Left colon (tissue), 2 donors: ENCODE measurements at regions of chr17 and their contacts with region 1.

Region 1: DNA sequence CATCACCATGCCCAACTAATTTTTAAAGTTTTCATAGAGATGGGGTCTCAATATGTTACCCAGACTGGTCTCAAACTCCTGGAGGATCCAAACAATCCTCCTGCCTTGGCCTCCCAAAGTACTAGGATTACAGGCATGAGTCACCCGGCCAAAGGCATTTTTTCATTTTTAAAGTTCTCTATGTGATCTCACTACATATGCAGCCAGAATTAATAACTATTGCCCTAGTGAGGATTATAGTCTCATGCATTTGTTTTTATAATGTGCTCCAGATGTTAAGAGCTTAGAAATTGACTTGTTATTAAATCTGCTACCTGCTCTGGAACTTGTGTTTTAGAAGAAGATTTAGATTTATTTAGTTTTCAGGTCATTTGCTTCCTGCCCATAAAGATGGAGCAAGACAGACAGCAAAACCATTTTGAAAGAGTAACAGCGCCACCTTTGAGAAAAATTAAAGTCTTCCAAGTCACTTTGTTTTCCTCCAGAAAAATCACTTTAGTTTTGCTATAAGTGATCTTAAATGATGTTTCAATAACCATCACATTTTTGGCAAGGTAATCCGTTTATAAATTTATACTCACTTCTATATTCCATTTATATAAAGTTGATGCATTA is 79.5 kb downstream of the CA4 start:
- DNase-seq: no peak
- ATAC-seq: no peak

Region 2: DNA sequence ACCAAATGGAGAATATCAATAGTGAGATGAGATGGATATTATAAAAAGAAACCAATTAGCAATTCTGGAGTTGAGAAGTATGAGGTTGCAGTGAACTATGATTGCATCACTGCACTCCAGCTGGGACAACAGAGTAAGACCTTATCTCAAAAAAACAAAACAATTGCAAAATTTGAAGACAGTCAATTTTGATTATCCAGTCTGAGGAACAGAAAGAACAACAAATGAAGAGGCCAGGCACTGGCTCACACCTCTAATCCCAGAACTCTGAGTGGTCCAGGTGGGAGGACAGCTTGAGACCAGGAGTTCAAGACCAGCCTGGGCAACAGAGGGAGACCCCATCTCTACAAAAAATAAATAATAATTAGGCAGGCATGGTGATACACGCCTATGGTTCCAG is 127.6 kb after region 1 on chr17:
- intact Hi-C with region 1: no loop called
- DNase-seq: no peak
- ATAC-seq: no peak

Region 3: DNA sequence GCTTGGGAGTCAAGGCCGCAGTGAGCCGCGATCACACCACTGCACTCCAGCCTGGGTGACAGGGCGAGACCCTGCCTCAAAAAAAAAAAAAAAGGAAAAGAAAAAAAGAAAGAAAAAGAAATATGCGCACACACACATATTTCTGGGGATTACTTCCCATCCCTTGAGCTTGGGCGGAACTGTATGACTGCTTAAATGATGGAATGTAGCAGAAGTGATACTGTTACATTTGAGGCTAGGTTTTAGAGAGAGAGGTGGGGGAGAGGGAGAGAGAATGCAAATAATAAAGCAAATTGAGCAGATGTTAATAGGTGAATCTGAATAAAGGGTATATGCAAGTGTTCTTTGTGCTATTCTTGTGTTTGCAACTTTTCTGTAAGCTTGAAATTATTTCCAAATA is 174.7 kb after region 1 on chr17:
- intact Hi-C with region 1: no loop called
- DNase-seq: no peak
- ATAC-seq: no peak

Region 4: DNA sequence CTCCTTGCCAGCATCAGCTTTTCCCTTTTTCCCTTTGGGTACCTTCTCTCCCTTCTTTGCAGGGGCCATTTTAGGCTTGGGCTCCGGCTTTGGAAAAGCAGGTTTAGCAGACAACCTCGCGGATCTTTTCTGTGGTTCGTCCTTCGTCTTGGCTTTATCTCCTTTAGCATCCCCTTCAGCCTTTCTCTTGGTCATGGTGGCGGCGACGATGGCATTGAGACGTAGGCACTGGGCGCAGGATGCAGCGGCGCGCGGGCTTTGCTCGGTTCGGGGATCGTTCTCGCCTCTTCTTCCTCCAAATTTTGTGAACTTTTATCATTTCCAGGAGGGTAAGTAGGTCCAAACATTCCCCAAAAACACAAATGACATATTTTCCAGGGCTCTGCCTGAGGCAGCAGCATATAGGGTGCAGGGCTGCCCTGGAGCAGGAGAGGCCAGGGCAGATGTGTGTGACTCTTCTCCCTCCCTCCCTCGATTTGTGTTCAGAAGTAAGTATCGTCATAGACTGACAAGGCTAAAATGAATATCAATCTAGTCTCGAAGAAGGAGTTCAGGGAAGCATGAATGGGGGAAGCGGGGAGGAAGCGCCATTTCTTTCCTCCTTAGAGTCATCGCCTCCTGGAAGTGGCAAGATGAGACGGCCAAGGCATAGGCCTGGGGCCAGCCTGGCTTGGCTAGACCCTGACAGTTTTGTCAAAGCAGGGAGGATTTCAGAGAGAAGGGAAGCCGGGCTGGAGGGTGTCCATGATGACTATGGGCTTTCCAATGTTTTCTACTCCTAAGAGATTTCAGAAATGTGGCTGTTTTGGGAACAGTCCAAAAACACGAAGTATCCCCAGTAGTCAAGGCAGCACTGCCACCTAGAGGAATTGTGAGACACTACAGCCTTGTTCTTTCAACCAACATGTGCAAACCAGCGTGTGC is 206.2 kb after region 1 on chr17:
- intact Hi-C with region 1: loop called in 1 of 2 experiments (anchors 10 kb)
- DNase-seq: peak in 1 of 2 donors; percentile 55
- ATAC-seq: peak; percentile 77

Region 5: DNA sequence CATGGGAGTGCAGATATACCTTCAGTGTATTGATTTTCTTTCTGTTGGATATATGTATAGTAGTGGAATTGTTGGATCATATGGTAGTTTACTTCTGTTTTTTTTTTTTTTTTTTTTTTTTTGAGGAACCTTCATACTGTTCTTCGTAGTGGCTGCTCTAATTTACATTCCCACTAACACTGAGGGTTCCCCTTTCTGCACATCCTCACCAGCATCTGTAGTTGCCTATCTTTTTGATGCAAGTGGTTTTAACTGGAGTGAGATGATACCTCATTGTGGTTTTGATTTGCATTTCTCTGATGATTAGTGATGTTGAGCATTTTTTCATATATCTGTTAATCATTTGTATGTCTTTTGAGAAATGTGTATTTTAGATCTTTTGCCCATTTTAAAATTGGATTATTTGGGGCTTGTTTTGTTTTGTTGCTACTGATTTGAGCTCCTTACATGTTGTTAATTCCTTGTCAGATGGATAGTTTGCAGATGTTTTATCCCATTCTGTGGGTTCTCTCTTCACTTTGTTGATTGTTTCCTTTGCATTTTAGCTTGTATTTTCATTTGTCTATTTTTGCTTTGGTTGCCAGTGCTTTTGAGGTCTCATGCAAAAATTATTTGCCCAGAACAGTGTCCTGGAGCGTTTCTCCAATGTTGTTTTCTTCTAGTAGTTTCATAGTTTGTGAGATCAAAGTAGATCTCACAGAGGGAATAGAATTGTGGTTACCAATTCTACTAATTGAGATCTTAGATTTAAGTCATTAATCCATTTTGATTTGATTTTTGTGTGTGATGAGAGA is 423.4 kb after region 1 on chr17:
- intact Hi-C with region 1: no loop called
- DNase-seq: no peak
- ATAC-seq: no peak